PC-9 (cell line): ENCODE measurements at regions of chr2 and their contacts with region 1.

Region 1: GRCh38 chr2:20438334-20439192 is 8.3 kb upstream of the RHOB start:
- DNase-seq: peak in 1 of 2 experiments; percentile 96
- H3K4me3 ChIP-seq: peak overlapping the region; percentile 35; the same call in 1 of the 2 replicates
- H3K27ac ChIP-seq: peak overlapping the region; percentile 76
- H3K4me1 ChIP-seq: peaks cover 37% of the 10 kb centered on the region
- H3K27me3 ChIP-seq: no peaks in the 10 kb centered on the region
- CTCF ChIP-seq: no peak

Region 2: DNA sequence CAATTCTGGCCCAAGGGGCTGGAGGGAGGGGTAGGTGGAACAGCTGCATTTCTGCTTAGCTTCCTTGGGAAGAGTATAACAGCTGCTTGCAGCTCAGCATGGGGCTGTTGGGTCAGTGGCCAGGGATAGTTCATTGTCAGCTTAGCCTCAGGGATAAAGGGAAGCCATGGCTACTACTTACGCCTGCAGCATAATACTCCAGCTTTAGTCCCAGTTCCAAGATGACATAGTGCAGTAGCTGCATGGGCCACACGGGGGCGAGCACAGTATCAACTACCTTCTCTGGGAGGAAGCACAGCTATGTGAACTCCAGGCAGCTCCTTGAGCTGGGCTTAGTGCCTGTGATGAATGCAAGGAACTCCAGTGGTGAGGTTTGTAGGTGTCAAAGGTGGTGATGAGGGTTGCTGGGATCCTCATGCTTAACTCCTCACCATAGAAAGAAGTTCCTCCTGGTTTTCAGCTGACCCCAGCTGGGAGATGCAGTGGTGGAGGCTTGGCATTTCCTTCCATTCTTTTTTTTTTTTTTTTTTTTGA is 27.1 kb before region 1 on chr2:
- CTCF ChIA-PET with region 1: interaction called, 18 read pairs
- POLR2A ChIA-PET with region 1: interaction called, 3 read pairs
- intact Hi-C with region 1: loop called (anchors 1 kb)
- DNase-seq: peak; percentile 68 to 83
- H3K4me3 ChIP-seq: no peak overlapping the region
- H3K27ac ChIP-seq: no peak overlapping the region
- H3K4me1 ChIP-seq: no peaks in the 10 kb centered on the region
- H3K27me3 ChIP-seq: no peaks in the 10 kb centered on the region
- CTCF ChIP-seq: peak; percentile 92

Region 3: DNA sequence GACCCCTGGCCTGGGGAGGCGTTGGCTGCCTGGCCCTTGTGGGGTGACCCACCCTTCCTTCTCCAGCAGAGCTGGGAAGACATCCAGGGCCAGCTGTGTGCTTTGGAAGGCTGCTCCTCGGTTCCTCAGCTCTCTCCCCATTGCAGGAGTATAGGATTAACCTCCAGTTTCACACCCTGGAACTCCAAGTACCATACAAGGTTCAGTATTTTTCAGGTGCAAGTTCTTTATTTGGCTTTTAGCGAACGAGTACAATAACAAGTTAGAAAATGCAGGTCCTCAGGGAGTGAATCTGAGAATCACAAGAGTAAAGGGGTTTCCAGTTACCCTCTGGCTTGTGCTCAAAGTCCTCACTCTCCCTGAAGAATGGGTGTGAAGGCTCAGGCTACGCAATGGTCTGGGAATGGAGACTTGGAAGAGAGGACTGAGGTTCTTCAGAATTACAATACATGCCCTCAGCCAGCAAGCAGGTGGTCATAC is 504.1 kb after region 1 on chr2:
- CTCF ChIA-PET with region 1: no interaction called
- POLR2A ChIA-PET with region 1: no interaction called
- intact Hi-C with region 1: no loop called
- DNase-seq: no peak
- H3K4me3 ChIP-seq: no peak overlapping the region
- H3K27ac ChIP-seq: no peak overlapping the region
- H3K4me1 ChIP-seq: no peaks in the 10 kb centered on the region
- H3K27me3 ChIP-seq: peaks cover 55% of the 10 kb centered on the region
- CTCF ChIP-seq: no peak